ENCODE measurements at regions of chr7 and their contacts with region 1.

Region 1: DNA sequence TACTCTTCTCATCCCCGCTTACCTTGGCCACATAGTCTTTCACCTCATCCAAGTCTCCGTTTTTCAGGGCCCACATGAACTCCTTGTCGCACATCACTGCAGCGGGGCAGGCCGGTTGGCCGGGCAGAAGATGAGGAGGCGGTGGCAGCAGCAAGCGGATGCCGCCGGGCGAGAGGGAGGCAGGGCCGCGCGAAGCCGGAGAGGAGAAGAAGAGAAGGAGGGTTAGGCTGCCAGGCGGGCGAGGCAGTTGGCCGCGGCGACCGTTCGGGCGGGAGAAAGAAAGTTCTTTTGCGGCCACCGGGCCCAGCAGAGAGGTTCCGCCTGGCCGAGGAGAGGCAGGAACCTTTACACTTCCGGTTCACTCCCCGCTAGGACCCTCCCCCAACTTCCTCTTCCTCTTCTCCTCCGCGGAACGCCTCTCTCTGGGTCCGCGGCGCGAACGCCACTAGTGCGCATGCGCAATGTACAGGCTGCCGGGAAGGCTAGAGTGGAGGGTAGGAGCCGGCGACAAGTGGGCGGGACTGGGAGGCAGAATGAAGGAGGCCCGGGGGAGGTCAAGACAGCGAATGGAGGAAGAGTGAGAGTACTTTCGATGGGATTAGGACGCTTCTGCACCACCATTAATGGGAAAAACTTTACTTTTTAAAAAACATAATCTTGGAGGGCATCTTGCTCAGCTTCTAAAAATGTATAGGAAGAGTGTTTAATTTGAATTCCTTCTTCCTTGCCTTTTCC is at the start of gene MTPN:
- DNase-seq: peak; percentile 98
- ATAC-seq: peak; percentile 87
- H3K4me3 Mint-ChIP-seq: peak within 1 kb of the TSS; percentile 99
- H3K27ac Mint-ChIP-seq: peak within 1 kb of the TSS; percentile 97
- H3K4me1 Mint-ChIP-seq: peaks cover 73% of the 10 kb centered on the region
- H3K27me3 Mint-ChIP-seq: no peaks in the 10 kb centered on the region
- total RNA-seq, gene MTPN: 123 to 136 TPM

Region 2: GRCh38 chr7:135558337-135558767 is 418.8 kb before region 1 on chr7:
- CTCF ChIA-PET with region 1: no interaction called
- POLR2A ChIA-PET with region 1: no interaction called
- intact Hi-C with region 1: loop called in 1 of 2 experiments (anchors 2 kb)
- DNase-seq: peak; percentile 78
- ATAC-seq: peak; percentile 73
- H3K4me3 Mint-ChIP-seq: no peak overlapping the region
- H3K27ac Mint-ChIP-seq: no peak overlapping the region
- H3K4me1 Mint-ChIP-seq: peaks cover 29% of the 10 kb centered on the region
- H3K27me3 Mint-ChIP-seq: no peaks in the 10 kb centered on the region

Region 3: GRCh38 chr7:135757719-135758411 is 219.3 kb before region 1 on chr7:
- CTCF ChIA-PET with region 1: no interaction called
- POLR2A ChIA-PET with region 1: no interaction called
- intact Hi-C with region 1: no loop called
- DNase-seq: no peak
- ATAC-seq: no peak
- H3K4me3 Mint-ChIP-seq: no peak overlapping the region
- H3K27ac Mint-ChIP-seq: no peak overlapping the region
- H3K4me1 Mint-ChIP-seq: no peaks in the 10 kb centered on the region
- H3K27me3 Mint-ChIP-seq: peaks cover 32% of the 10 kb centered on the region

Region 4: GRCh38 chr7:135939261-135939812 is 37.8 kb before region 1 on chr7:
- CTCF ChIA-PET with region 1: no interaction called
- POLR2A ChIA-PET with region 1: no interaction called
- intact Hi-C with region 1: no loop called
- DNase-seq: no peak
- ATAC-seq: no peak
- H3K4me3 Mint-ChIP-seq: no peak overlapping the region
- H3K27ac Mint-ChIP-seq: no peak overlapping the region
- H3K4me1 Mint-ChIP-seq: peaks cover 62% of the 10 kb centered on the region
- H3K27me3 Mint-ChIP-seq: no peaks in the 10 kb centered on the region

Region 5: GRCh38 chr7:135964274-135964673 is 12.9 kb before region 1 on chr7:
- CTCF ChIA-PET with region 1: no interaction called
- POLR2A ChIA-PET with region 1: no interaction called
- intact Hi-C with region 1: loop called in 1 of 2 experiments (anchors 1 kb)
- DNase-seq: no peak
- ATAC-seq: no peak
- H3K4me3 Mint-ChIP-seq: no peak overlapping the region
- H3K27ac Mint-ChIP-seq: no peak overlapping the region
- H3K4me1 Mint-ChIP-seq: peaks cover 70% of the 10 kb centered on the region
- H3K27me3 Mint-ChIP-seq: no peaks in the 10 kb centered on the region

Region 6: DNA sequence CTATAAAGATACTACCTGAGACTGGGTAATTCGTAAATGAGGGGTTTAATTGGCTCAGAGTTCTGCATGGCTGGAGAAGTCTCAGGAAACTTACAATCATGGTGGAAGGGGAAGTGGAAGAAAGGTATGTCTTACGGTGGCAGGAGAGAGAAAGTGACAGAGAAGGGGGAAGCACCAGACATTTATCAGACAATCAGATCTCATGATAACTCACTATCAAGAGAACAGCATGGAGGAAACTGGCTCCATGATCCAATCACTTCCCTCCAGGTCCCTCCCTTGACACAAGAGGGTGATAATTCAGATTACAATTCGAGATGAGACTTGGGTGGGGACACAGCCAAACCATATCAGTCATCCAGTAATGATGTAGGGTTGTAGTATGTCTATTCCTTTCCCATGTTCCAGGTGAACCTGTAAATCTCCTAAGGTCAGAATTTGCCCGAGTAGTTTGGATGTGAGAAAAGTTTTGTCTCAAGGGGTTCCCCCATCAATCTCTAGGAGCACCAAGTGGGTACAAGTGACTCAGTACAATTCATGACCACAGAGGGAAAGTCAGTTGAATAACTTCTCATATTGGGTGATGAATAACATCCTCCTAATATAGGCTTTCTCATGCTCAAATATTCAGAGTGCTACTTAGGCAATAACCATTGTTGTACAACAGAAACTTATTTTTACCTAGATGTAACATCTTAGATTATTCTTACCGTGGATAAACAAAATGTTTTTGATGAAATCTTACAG is 39.6 kb after region 1 on chr7:
- CTCF ChIA-PET with region 1: no interaction called
- POLR2A ChIA-PET with region 1: no interaction called
- intact Hi-C with region 1: loop called (anchors 2 kb)
- DNase-seq: peak; percentile 15
- ATAC-seq: peak; percentile 92
- H3K4me3 Mint-ChIP-seq: no peak overlapping the region
- H3K27ac Mint-ChIP-seq: peak overlapping the region; percentile 21
- H3K4me1 Mint-ChIP-seq: peaks cover 21% of the 10 kb centered on the region
- H3K27me3 Mint-ChIP-seq: peaks cover 20% of the 10 kb centered on the region

Measured in activated CD4-positive, alpha-beta T cell treated with anti-CD3 and anti-CD28 coated beads for 36 hours (primary cell).